ENCODE measurements at regions of chr10 and their contacts with region 1.

Region 1: GRCh38 chr10:114304017-114304570 is 65.0 kb downstream of the VWA2 start:
- DNase-seq: peak; percentile 76 to 97 (median 86)

Region 2: GRCh38 chr10:114458955-114459354 is 154.9 kb after region 1 on chr10:
- intact Hi-C with region 1: loop called (anchors 2 kb)
- DNase-seq: peak in 4 of 10 donors; percentile 5 to 90 (median 25)

Region 3: GRCh38 chr10:114470956-114471905 is 167.1 kb after region 1 on chr10:
- intact Hi-C with region 1: no loop called
- DNase-seq: peak; percentile 38 to 95 (median 67)

Region 4: DNA sequence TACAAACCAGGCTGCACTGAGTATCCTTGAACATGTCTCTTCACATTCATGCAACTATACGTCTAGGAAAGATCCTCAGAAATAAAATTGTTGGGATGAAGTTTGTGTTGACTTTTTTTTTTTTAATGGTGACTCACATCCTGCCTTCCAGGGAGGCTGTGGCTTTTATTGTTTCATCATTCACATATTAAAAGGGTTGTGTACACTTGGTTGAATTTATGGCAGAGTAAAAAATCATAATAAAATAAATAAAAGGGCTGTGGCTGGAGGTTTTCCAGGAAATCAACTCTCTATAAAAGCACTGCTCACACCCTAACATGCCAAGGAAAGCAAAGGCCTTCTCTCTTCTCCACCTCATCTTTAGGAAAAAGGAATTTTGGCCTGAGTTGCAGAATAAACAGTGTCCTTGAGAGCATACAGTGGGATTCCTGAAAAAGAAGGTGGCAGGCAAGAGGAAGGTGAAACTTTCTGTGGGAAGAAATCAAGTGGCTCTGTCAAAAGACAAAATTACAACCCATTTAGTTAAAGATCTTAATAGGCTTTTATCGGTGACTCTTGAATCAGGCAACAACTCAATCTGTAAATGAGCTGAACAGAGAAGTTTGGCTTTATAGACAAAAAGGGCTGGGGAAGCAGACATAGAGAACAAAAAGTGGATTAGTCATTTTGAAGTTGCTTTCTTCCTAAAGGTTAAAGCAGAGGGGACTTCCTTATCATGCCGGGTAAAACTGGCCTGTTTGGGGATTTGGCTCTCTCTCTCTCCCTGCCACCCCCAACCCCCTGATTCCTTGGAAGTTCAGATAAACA is 475.9 kb after region 1 on chr10:
- intact Hi-C with region 1: loop called (anchors 5 kb)
- DNase-seq: no peak

Measured in posterior cingulate gyrus (tissue), 11 donors.